ENCODE measurements at regions of chr20 and their contacts with region 1.

Region 1: GRCh38 chr20:43955062-43955749 is 40.6 kb downstream of the TOX2 start:
- DNase-seq: peak; percentile 40
- H3K4me3 Mint-ChIP-seq: peak overlapping the region; percentile 24
- H3K27ac Mint-ChIP-seq: peak overlapping the region; percentile 77
- H3K4me1 Mint-ChIP-seq: peaks cover 65% of the 10 kb centered on the region
- H3K27me3 Mint-ChIP-seq: peaks cover 26% of the 10 kb centered on the region

Region 2: GRCh38 chr20:43925801-43926200 is 29.4 kb before region 1 on chr20:
- intact Hi-C with region 1: loop called (anchors 1 kb)
- DNase-seq: no peak
- H3K4me3 Mint-ChIP-seq: peak overlapping the region; percentile 32
- H3K27ac Mint-ChIP-seq: no peak overlapping the region
- H3K4me1 Mint-ChIP-seq: peaks cover 62% of the 10 kb centered on the region
- H3K27me3 Mint-ChIP-seq: peaks cover 37% of the 10 kb centered on the region

Region 3: GRCh38 chr20:43969501-43970182 is 14.4 kb after region 1 on chr20:
- intact Hi-C with region 1: loop called (anchors 2 kb)
- DNase-seq: no peak
- H3K4me3 Mint-ChIP-seq: no peak overlapping the region
- H3K27ac Mint-ChIP-seq: no peak overlapping the region
- H3K4me1 Mint-ChIP-seq: peaks cover 13% of the 10 kb centered on the region
- H3K27me3 Mint-ChIP-seq: peaks cover 4% of the 10 kb centered on the region

Region 4: DNA sequence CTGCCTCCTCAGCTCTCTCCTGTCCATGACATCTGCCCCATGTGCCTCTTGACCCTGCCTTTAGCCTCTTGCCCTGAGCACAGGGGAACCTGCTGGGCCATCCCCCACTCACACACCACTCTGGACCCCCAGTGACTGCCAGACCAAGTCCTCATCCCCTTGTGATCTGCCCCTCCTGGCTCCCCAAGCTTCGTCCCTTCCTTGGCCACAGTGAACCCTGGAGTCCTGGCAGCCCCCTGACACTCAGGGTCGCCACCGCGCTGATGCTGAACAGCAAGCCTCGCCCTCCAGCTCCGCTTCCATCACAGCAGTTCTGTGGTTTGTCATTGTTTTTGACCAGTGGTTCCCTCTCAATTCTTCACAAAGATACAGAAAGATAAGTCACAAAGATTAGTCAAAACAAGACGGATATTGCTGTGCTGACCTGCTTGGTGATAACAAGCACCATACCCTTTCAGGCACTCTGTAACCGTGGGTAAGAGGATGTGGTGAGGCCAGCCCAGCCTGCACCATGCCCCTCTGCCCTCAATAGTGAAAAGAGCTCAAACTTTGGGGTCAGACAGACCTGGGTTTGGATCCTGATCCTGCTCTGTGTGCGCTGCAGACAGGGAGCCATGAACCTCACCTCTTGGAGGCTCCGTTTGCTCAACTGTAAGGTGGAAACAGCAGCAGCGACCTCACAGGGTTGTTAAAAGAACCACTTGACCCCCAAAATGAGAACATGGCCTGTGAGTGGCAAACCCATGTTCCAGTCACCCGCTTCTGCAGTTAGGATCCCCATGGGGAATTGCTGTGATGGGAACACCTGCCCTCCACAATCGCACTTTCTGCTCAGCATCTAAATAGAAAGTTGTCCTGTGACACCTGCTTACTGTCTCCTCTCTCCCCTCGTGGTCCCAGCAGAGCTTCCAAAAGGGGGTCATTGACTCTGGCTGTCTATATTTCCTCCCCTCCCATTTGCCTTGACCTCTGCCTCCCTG is 74.0 kb after region 1 on chr20:
- intact Hi-C with region 1: loop called (anchors 2 kb)
- DNase-seq: peak; percentile 35
- H3K4me3 Mint-ChIP-seq: peak overlapping the region; percentile 49
- H3K27ac Mint-ChIP-seq: peak overlapping the region; percentile 10
- H3K4me1 Mint-ChIP-seq: peaks cover 49% of the 10 kb centered on the region
- H3K27me3 Mint-ChIP-seq: peaks cover 51% of the 10 kb centered on the region

Measured in activated T-helper 2 cell treated with anti-CD3 and anti-CD28 coated beads, Interferon-gamma antibody, Interleukin-2, Interleukin-4, amounts not matched to agents 10 μg/mL and 5 μg/mL and 100 μg/mL, durations not matched to agents 14 hours and 24 hours and 36 hours (primary cell).